ENCODE measurements at regions of chr7 and their contacts with region 1.

Region 1: DNA sequence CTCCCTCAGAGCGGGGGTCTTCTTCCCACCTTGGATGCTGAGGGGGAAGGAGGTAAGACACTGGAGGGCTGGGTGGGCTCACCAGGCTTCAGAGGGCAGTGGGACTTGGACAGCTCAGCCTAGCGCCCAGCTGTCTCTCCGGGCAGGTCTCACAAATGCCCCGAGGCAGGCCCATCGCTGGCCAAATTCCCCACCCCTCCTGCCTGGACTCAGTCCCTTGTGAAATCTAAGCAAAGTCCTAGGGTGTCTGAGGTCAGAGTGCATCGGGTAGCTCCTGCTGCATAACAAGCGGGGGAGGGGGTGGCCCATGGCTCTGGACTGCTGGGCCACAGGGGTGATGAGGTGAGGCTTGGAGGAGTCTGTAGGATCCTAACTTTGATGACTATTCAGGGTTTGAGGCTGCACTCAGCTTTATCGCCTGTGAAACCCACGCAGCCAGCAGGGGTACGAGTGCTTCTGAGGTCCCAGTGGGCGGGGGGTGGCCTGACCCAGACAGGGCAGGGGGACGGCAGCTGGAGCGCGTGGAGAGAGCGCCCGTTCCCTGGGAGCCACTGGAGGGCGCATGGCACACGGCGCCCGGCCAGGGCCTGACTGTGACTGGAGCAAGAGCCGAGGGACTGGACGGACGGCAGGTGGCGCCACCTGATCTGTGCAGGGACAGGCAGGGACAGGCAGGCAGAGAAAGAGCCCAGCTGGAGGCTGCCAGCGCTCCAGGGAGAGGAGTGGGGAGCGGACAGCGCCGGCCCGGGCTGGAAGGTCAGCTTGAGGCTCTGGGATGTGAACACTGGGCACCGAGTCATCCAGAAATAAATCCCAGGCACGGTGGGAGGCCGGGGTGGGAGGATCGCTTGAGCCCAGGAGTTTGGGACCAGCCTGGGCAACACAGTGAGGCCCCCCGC is 10.0 kb downstream of the CYP2W1 start:
- DNase-seq: peak; percentile 94
- ATAC-seq: peak; percentile 96
- H3K4me3 ChIP-seq: no peak overlapping the region
- H3K4me3 Mint-ChIP-seq: peak overlapping the region; percentile 47
- H3K27ac ChIP-seq: no peak overlapping the region
- H3K27ac Mint-ChIP-seq: peak overlapping the region; percentile 90
- H3K4me1 ChIP-seq: peaks cover 0 to 9% of the 10 kb centered on the region in 2 donors
- H3K4me1 Mint-ChIP-seq: peaks cover 13% of the 10 kb centered on the region
- H3K27me3 ChIP-seq: peaks cover 0 to 22% (median 2%) of the 10 kb centered on the region in 4 experiments
- H3K27me3 Mint-ChIP-seq: no peaks in the 10 kb centered on the region
- CTCF ChIP-seq: peak; percentile 100

Region 2: DNA sequence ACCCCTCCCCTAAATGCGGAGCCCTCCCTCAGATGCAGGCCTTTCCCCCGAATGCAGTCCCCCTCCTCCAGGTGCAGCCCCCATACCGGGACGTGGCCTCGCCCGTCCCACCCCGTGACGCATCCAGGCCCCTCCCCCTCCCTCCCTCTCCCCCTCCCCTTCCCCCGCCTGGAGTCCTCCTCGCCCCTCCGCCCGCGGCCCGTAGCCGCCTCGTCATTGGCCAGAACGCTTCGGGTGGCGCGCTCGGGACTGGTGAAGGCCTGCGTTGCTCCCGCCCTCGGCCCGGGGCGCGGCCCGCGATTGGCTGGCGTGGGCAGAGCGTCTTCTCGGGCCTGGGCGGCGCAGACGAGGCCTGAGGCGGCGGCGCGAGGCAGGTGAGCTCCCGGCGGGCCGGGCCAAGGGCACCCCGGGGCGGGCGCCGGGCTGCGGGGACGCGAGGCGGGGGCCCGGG is 176.6 kb before region 1 on chr7:
- CTCF ChIA-PET with region 1: no interaction called
- POLR2A ChIA-PET with region 1: no interaction called
- intact Hi-C with region 1: no loop called
- DNase-seq: peak; percentile 97
- ATAC-seq: peak; percentile 92
- H3K4me3 ChIP-seq: peak overlapping the region in 4 of 5 experiments; percentile 49 to 71 (median 66)
- H3K4me3 Mint-ChIP-seq: peak overlapping the region; percentile 86
- H3K27ac ChIP-seq: no peak overlapping the region
- H3K27ac Mint-ChIP-seq: peak overlapping the region; percentile 73
- H3K4me1 ChIP-seq: peaks cover 29 to 43% of the 10 kb centered on the region in 2 donors
- H3K4me1 Mint-ChIP-seq: peaks cover 58% of the 10 kb centered on the region
- H3K27me3 ChIP-seq: no peaks in the 10 kb centered on the region
- H3K27me3 Mint-ChIP-seq: no peaks in the 10 kb centered on the region
- CTCF ChIP-seq: no peak

Region 3: GRCh38 chr7:909358-910329 is 83.3 kb before region 1 on chr7:
- CTCF ChIA-PET with region 1: interaction called, 32 read pairs
- POLR2A ChIA-PET with region 1: interaction called, 8 read pairs
- intact Hi-C with region 1: no loop called
- DNase-seq: peak; percentile 85
- ATAC-seq: peak; percentile 40
- H3K4me3 ChIP-seq: peak overlapping the region in 4 of 5 experiments; percentile 29 to 61 (median 51)
- H3K4me3 Mint-ChIP-seq: peak overlapping the region; percentile 85
- H3K27ac ChIP-seq: peak overlapping the region; percentile 1 to 33
- H3K27ac Mint-ChIP-seq: peak overlapping the region; percentile 68
- H3K4me1 ChIP-seq: peaks cover 16 to 20% of the 10 kb centered on the region in 2 donors
- H3K4me1 Mint-ChIP-seq: peaks cover 18% of the 10 kb centered on the region
- H3K27me3 ChIP-seq: no peaks in the 10 kb centered on the region
- H3K27me3 Mint-ChIP-seq: no peaks in the 10 kb centered on the region
- CTCF ChIP-seq: no peak

Region 4: GRCh38 chr7:1012004-1012715 is 19.2 kb after region 1 on chr7:
- CTCF ChIA-PET with region 1: interaction called, 13 read pairs
- POLR2A ChIA-PET with region 1: interaction called, 6 read pairs
- intact Hi-C with region 1: no loop called
- DNase-seq: no peak
- ATAC-seq: peak; percentile 18
- H3K4me3 ChIP-seq: no peak overlapping the region
- H3K4me3 Mint-ChIP-seq: peak overlapping the region; percentile 52
- H3K27ac ChIP-seq: no peak overlapping the region
- H3K27ac Mint-ChIP-seq: no peak overlapping the region
- H3K4me1 ChIP-seq: peaks cover 10 to 17% of the 10 kb centered on the region in 2 donors
- H3K4me1 Mint-ChIP-seq: peaks cover 43% of the 10 kb centered on the region
- H3K27me3 ChIP-seq: no peaks in the 10 kb centered on the region
- H3K27me3 Mint-ChIP-seq: no peaks in the 10 kb centered on the region
- CTCF ChIP-seq: no peak

Region 5: GRCh38 chr7:1044191-1045068 is 51.5 kb after region 1 on chr7 and contains the start of gene GPR146:
- CTCF ChIA-PET with region 1: interaction called, 36 read pairs
- POLR2A ChIA-PET with region 1: interaction called, 6 read pairs
- intact Hi-C with region 1: loop called (anchors 1 kb)
- DNase-seq: peak; percentile 91
- ATAC-seq: peak; percentile 95
- H3K4me3 ChIP-seq: peak within 1 kb of the TSS; percentile 11 to 75 (median 63)
- H3K4me3 Mint-ChIP-seq: peak within 1 kb of the TSS; percentile 96
- H3K27ac ChIP-seq: peak within 1 kb of the TSS in 1 of 2 donors; percentile 69
- H3K27ac Mint-ChIP-seq: peak within 1 kb of the TSS; percentile 75
- H3K4me1 ChIP-seq: peaks cover 17 to 20% of the 10 kb centered on the region in 2 donors
- H3K4me1 Mint-ChIP-seq: peaks cover 28% of the 10 kb centered on the region
- H3K27me3 ChIP-seq: peaks cover 0 to 5% (median 1%) of the 10 kb centered on the region in 4 experiments
- H3K27me3 Mint-ChIP-seq: peaks cover 3% of the 10 kb centered on the region
- CTCF ChIP-seq: peak; percentile 80
- total RNA-seq, gene GPR146: 44.6 and 45.4 TPM in 2 replicates

Region 6: DNA sequence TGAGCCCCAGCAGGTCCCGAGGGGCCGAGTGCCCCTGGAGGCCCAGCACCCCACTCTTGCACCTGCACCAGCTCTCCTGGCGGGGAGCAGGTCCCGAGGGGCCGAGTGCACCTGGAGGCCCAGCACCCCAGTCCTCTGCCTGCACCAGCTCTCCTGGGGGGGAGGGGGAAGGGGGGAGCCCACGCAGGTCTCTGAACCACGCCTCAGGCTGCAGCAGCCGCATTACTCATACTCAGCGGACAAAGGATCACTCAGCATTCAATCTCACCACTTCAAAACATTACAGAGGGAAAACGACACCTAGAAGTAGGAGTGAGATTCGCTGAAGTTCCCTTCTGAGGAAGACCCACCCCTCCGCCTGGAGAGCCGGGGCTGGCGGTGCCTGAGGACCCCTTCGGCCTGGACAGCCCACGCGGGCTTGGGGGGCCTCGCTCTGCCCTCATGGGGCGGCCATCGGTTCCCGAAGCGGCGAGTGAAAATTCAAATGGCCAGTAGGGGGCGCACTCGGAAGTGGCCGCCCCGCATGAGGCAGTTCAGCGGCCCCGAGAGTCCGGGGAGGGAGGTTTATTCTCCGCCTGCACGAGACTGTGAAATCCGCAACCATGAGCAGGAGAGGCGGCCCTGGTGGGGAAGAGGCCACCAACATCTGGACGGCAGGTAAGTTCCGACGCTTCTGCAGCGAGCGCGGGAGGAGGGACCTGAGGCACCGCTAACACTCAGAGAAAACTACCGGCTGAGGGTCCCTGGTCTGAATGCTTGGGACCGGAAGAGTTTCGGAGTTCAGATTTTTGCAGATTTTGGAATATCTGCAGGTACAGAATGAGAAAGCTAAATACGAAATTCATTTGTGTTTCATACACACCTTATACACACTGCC is 93.9 kb after region 1 on chr7:
- CTCF ChIA-PET with region 1: interaction called, 49 read pairs
- POLR2A ChIA-PET with region 1: interaction called, 9 read pairs
- intact Hi-C with region 1: loop called (anchors 1 kb)
- DNase-seq: peak; percentile 93
- ATAC-seq: peak; percentile 93
- H3K4me3 ChIP-seq: peak overlapping the region in 4 of 5 experiments; percentile 27 to 53 (median 42)
- H3K4me3 Mint-ChIP-seq: peak overlapping the region; percentile 94
- H3K27ac ChIP-seq: peak overlapping the region; percentile 57 to 73
- H3K27ac Mint-ChIP-seq: peak overlapping the region; percentile 82
- H3K4me1 ChIP-seq: peaks cover 20 to 39% of the 10 kb centered on the region in 2 donors
- H3K4me1 Mint-ChIP-seq: peaks cover 42% of the 10 kb centered on the region
- H3K27me3 ChIP-seq: no peaks in the 10 kb centered on the region
- H3K27me3 Mint-ChIP-seq: no peaks in the 10 kb centered on the region
- CTCF ChIP-seq: peak; percentile 98

Region 7: GRCh38 chr7:1144269-1144771 is 151.4 kb after region 1 on chr7:
- CTCF ChIA-PET with region 1: interaction called, 84 read pairs
- POLR2A ChIA-PET with region 1: interaction called, 9 read pairs
- intact Hi-C with region 1: loop called (anchors 1 kb)
- DNase-seq: peak; percentile 65
- ATAC-seq: peak; percentile 42
- H3K4me3 ChIP-seq: no peak overlapping the region
- H3K4me3 Mint-ChIP-seq: peak overlapping the region; percentile 75
- H3K27ac ChIP-seq: no peak overlapping the region
- H3K27ac Mint-ChIP-seq: peak overlapping the region; percentile 85
- H3K4me1 ChIP-seq: peaks cover 15 to 33% of the 10 kb centered on the region in 2 donors
- H3K4me1 Mint-ChIP-seq: peaks cover 32% of the 10 kb centered on the region
- H3K27me3 ChIP-seq: no peaks in the 10 kb centered on the region
- H3K27me3 Mint-ChIP-seq: no peaks in the 10 kb centered on the region
- CTCF ChIP-seq: peak; percentile 27

Region 8: GRCh38 chr7:1181640-1182039 is 188.7 kb after region 1 on chr7:
- CTCF ChIA-PET with region 1: interaction called, 138 read pairs
- POLR2A ChIA-PET with region 1: no interaction called
- intact Hi-C with region 1: loop called (anchors 1 kb)
- DNase-seq: no peak
- ATAC-seq: no peak
- H3K4me3 ChIP-seq: no peak overlapping the region
- H3K4me3 Mint-ChIP-seq: no peak overlapping the region
- H3K27ac ChIP-seq: no peak overlapping the region
- H3K27ac Mint-ChIP-seq: no peak overlapping the region
- H3K4me1 ChIP-seq: peaks cover under 1 to 2% of the 10 kb centered on the region in 2 donors
- H3K4me1 Mint-ChIP-seq: peaks cover 4% of the 10 kb centered on the region
- H3K27me3 ChIP-seq: peaks cover 0 to 26% (median 10%) of the 10 kb centered on the region in 4 experiments
- H3K27me3 Mint-ChIP-seq: peaks cover 37% of the 10 kb centered on the region
- CTCF ChIP-seq: no peak

Region 9: DNA sequence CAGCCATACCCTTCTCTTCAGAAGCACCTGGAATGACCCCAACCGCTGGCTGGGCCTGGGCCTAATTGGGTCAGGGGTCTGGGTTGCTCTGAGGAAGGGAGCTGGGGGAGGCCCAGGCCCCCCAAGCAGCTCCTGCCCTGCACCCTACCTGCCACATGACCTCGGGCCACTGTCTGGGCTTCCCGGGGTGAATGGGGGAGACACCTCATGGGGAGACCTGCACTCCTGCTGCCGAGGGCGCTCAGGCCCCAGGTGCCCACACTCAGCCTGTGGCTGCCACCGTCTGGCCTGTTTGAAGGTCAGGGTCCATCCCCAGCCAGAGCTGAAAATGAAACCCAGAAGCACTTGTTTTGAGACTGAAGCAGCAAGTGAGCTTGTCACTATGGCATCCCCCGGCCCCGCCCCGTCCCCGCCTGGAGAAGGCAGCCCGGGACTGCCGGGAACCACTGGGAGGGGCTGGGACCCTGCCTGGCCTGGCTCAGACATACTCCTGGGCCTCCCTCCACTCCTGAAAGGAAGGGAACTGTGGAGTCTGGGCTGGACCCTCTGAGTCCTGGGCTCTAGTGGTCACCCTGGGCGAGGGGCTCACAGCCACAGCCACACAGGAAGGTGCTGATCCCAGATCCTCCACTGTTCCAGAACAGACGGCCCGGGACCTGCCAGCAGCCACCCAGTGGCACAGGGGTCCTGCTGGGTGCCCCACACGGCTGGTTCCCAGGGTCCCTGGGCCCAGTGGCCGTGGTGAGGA is 473.7 kb after region 1 on chr7:
- CTCF ChIA-PET with region 1: no interaction called
- POLR2A ChIA-PET with region 1: no interaction called
- intact Hi-C with region 1: no loop called
- DNase-seq: no peak
- ATAC-seq: no peak
- H3K4me3 ChIP-seq: no peak overlapping the region
- H3K4me3 Mint-ChIP-seq: no peak overlapping the region
- H3K27ac ChIP-seq: no peak overlapping the region
- H3K27ac Mint-ChIP-seq: no peak overlapping the region
- H3K4me1 ChIP-seq: no peaks in the 10 kb centered on the region
- H3K4me1 Mint-ChIP-seq: peaks cover 4% of the 10 kb centered on the region
- H3K27me3 ChIP-seq: no peaks in the 10 kb centered on the region
- H3K27me3 Mint-ChIP-seq: no peaks in the 10 kb centered on the region
- CTCF ChIP-seq: no peak

Region 10: GRCh38 chr7:2844165-2844898 is 1851.4 kb after region 1 on chr7 and contains the start of gene GNA12:
- CTCF ChIA-PET with region 1: no interaction called
- POLR2A ChIA-PET with region 1: no interaction called
- intact Hi-C with region 1: no loop called
- DNase-seq: peak; percentile 98
- ATAC-seq: peak; percentile 93
- H3K4me3 ChIP-seq: peak within 1 kb of the TSS; percentile 50 to 70 (median 65)
- H3K4me3 Mint-ChIP-seq: peak within 1 kb of the TSS; percentile 95
- H3K27ac ChIP-seq: peak within 1 kb of the TSS in 1 of 2 donors; percentile 53
- H3K27ac Mint-ChIP-seq: peak within 1 kb of the TSS; percentile 80
- H3K4me1 ChIP-seq: peaks cover 34 to 45% of the 10 kb centered on the region in 2 donors
- H3K4me1 Mint-ChIP-seq: peaks cover 51% of the 10 kb centered on the region
- H3K27me3 ChIP-seq: no peaks in the 10 kb centered on the region
- H3K27me3 Mint-ChIP-seq: no peaks in the 10 kb centered on the region
- CTCF ChIP-seq: no peak
- total RNA-seq, gene GNA12: 110 and 114 TPM in 2 replicates